ENCODE measurements at regions of chr1 and their contacts with region 1.

Region 1: DNA sequence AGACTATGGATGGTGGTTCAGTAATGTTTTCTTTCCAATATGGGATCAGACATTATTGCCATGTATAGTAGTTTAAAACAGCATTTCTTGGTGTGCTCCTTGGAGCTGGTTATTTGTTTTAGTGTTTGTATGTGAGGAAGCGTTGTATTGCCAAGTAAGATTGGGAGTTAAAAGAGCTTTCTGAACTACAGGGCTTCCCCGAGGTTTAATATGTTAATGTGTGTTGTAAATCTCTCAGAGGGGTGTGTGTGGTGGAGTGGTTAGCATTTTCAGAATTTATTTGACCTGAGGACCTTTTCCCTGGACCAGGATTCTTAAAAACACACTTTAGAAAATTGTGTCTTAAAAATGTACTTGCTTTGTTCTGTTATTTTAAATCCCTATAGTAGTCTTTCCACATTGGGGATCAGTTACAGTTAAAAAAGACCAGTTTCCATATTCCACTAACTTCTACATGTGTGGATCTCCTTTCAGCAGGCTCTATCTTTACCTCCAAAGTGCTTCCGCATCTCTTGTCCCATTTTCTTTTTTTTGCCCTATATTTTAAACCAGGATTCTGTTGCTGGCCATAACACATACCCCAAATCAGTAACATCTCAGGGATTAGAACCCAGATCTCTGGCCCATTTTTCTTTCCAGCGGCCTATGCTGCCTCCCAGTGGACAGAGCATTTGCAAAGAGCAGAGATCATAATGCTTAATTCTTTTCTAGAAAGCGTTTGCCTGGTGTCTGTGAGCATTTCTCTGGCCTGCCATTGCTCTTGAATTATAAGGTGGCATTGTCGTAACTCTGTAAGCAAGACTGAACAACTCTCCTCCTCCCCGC is 58.6 kb downstream of the PBX1 start:
- DNase-seq: no peak
- ATAC-seq: no peak
- H3K4me3 ChIP-seq: no peak overlapping the region
- H3K4me3 Mint-ChIP-seq: no peak overlapping the region
- H3K27ac ChIP-seq: no peak overlapping the region
- H3K27ac Mint-ChIP-seq: no peak overlapping the region
- H3K4me1 ChIP-seq: no peaks in the 10 kb centered on the region
- H3K4me1 Mint-ChIP-seq: no peaks in the 10 kb centered on the region
- H3K27me3 ChIP-seq: no peaks in the 10 kb centered on the region
- H3K27me3 Mint-ChIP-seq: peaks cover 9% of the 10 kb centered on the region
- CTCF ChIP-seq: no peak

Region 2: GRCh38 chr1:163410073-163410999 is 1207.3 kb before region 1 on chr1:
- CTCF ChIA-PET with region 1: no interaction called
- POLR2A ChIA-PET with region 1: no interaction called
- intact Hi-C with region 1: loop called (anchors 10 kb)
- DNase-seq: peak; percentile 52
- ATAC-seq: no peak
- H3K4me3 ChIP-seq: no peak overlapping the region
- H3K4me3 Mint-ChIP-seq: no peak overlapping the region
- H3K27ac ChIP-seq: no peak overlapping the region
- H3K27ac Mint-ChIP-seq: no peak overlapping the region
- H3K4me1 ChIP-seq: peaks cover 7 to 13% of the 10 kb centered on the region in 2 donors
- H3K4me1 Mint-ChIP-seq: peaks cover 17% of the 10 kb centered on the region
- H3K27me3 ChIP-seq: peaks cover 0 to 3% (median 0%) of the 10 kb centered on the region in 4 experiments
- H3K27me3 Mint-ChIP-seq: peaks cover 5% of the 10 kb centered on the region
- CTCF ChIP-seq: peak; percentile 81

Region 3: GRCh38 chr1:164575356-164575886 is 42.2 kb before region 1 on chr1:
- CTCF ChIA-PET with region 1: no interaction called
- POLR2A ChIA-PET with region 1: no interaction called
- intact Hi-C with region 1: no loop called
- DNase-seq: no peak
- ATAC-seq: no peak
- H3K4me3 ChIP-seq: no peak overlapping the region
- H3K4me3 Mint-ChIP-seq: no peak overlapping the region
- H3K27ac ChIP-seq: no peak overlapping the region
- H3K27ac Mint-ChIP-seq: no peak overlapping the region
- H3K4me1 ChIP-seq: no peaks in the 10 kb centered on the region
- H3K4me1 Mint-ChIP-seq: no peaks in the 10 kb centered on the region
- H3K27me3 ChIP-seq: no peaks in the 10 kb centered on the region
- H3K27me3 Mint-ChIP-seq: peaks cover 7% of the 10 kb centered on the region
- CTCF ChIP-seq: no peak